ENCODE measurements at regions of chr3 and their contacts with region 1.

Region 1: DNA sequence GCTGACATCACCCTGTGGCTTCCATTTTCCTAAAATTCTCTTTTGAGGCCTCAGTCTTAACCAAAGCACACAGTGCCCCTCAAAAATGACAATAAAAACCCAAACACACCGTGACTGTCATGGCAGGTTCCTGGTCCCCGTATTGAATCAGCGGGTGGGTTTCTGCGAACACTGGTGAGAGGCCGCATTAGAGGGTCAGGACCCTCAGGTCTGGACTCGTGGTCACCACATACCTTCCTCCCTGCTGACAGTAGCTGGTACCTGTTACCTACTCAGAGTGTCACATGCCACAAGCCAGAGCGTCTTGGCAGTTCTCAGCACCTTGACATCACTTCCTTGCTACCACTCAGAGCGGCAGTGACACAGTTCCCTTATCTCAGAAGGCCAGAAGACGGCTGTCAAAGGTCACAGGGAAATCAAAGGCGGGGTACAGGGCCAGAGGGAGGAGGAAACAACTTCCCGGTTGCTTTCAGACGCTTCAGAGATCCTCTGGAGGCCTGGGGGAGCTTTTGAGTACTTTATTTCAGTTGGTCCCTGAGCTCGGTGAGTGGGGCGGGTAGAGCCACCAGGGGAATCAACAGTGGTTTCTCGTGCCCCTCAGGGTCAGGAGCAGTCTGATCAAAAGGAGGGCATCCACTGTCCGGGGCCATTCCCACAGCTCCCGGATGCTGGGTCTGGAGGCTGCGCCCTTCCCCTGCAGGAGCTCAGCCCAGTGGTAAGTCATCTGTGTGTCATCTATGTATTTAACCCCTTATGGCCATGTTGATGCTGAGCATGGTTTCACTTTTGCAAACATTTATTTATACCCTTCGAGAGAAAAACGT is at the starts of genes CCR5AS and CCRL2:
- DNase-seq: peak; percentile 86
- H3K4me3 ChIP-seq: peak within 1 kb of the TSS; percentile 19 to 67 (median 23)
- H3K27ac ChIP-seq: peak within 1 kb of the TSS; percentile 63
- H3K4me1 ChIP-seq: peaks cover 41% of the 10 kb centered on the region
- H3K27me3 ChIP-seq: no peaks in the 10 kb centered on the region
- CTCF ChIP-seq: no peak
- POLR2A ChIP-seq: peak; percentile 35
- total RNA-seq, gene CCRL2: 3.9 and 6.4 TPM in 2 replicates

Region 2: DNA sequence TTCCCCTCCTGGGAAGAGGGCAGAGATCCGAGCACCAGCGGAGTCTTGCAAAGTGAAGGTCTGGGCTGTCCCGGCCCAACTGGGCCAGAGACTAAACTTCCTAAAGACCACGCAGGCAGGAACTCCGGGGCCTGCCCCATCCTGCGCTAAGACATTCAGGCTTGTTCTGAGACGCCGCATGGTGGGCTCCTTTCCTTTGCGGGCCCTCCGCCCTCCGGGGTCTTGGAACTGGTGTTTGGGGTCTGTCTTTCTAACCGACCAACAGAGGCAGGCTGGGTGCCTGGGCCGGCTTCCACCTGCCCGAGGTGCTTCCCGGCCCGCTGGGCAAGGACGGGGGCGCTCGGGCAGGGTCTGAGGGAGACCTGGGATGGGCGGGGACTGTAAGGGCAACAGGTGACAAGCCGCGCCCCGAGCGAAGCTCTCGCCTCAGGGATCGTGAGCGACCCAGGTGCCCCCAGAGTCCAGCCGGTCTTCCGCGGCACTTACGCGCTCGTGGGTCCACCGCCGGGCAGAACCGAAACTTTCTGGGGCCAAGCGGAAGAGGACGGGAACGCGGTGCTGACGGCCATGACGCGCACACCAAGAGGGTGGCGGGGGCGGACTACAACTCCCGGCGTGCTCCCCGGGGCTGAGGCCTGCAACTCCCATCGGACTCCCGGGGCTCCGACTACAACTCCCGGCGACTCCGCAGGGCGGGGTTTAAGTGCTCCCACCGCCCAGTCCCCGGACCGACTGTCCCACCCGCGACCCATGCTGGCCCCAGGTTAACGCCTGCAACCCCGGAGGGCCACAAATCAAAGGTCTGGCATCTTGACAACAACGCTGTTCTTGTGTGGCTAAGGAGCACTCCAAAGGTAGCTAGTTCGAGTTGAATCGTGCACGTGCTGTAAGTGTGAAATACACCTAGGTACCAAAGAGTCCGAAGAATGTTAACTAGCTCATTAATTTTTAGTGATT is 411.5 kb before region 1 on chr3 and contains the start of gene FYCO1:
- CTCF ChIA-PET with region 1: no interaction called
- POLR2A ChIA-PET with region 1: no interaction called
- dilution Hi-C with region 1: no loop called
- intact Hi-C with region 1: loop called (anchors 5 kb)
- DNase-seq: peak; percentile 88
- H3K4me3 ChIP-seq: peak within 1 kb of the TSS; percentile 85 to 97 (median 97)
- H3K27ac ChIP-seq: peak within 1 kb of the TSS; percentile 44
- H3K4me1 ChIP-seq: peaks cover 7% of the 10 kb centered on the region
- H3K27me3 ChIP-seq: peaks cover 0 to 2% of the 10 kb centered on the region in 2 experiments
- CTCF ChIP-seq: no peak
- POLR2A ChIP-seq: peak; percentile 71
- total RNA-seq, gene FYCO1: 20.2 and 20.8 TPM in 2 replicates

Region 3: DNA sequence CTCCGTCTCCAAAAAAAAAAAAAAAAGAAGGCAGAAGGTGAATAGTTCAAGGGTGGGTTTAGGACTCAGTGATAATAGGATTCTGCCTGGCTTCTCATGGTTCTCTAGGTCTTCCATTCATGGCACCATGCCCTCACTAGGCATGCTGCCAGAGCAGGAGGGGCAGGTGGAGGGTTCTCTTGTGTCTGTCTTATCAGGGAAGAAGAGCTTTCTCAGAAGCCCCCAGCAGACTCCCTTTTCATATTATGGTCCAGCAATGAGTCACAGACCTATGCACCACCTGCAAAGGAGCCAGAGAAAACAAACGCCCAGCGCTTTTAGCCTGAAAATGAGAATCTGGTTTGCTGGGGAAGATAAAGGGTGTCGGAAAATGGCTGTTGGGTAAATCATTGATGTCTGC is 50.1 kb before region 1 on chr3:
- CTCF ChIA-PET with region 1: no interaction called
- POLR2A ChIA-PET with region 1: no interaction called
- dilution Hi-C with region 1: no loop called
- intact Hi-C with region 1: no loop called
- DNase-seq: no peak
- H3K4me3 ChIP-seq: no peak overlapping the region
- H3K27ac ChIP-seq: no peak overlapping the region
- H3K4me1 ChIP-seq: no peaks in the 10 kb centered on the region
- H3K27me3 ChIP-seq: peaks cover 7 to 12% of the 10 kb centered on the region in 2 experiments
- CTCF ChIP-seq: no peak
- POLR2A ChIP-seq: no peak

Region 4: DNA sequence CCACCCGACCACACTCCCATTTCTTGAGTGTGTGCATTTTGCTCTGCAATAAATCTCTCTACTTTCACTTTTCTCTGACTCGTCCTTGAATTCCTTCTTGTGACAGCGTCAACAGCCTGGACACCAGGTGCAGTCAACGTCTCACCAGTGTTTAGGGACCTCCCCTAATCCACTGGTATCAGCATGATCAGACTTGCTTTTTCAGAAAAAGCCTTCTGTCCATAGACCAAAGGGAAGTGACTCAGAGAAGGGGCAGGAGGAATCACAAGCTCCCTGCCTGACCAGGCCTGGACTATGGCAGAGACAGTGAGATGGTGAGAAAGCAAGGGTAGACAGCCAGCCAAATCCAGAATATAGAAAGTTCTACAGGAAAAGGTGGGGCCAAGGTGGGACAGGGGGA is 20.8 kb before region 1 on chr3:
- CTCF ChIA-PET with region 1: interaction called, 5 read pairs
- POLR2A ChIA-PET with region 1: no interaction called
- dilution Hi-C with region 1: no loop called
- intact Hi-C with region 1: loop called (anchors 1 kb)
- DNase-seq: peak; percentile 75
- H3K4me3 ChIP-seq: no peak overlapping the region
- H3K27ac ChIP-seq: no peak overlapping the region
- H3K4me1 ChIP-seq: no peaks in the 10 kb centered on the region
- H3K27me3 ChIP-seq: peaks cover 3 to 8% of the 10 kb centered on the region in 2 experiments
- CTCF ChIP-seq: no peak
- POLR2A ChIP-seq: no peak

Measured in endothelial cell of umbilical vein (primary cell).